Colonic mucosa (tissue), 4 donors: ENCODE measurements at regions of chr1 and their contacts with region 1.

Region 1: DNA sequence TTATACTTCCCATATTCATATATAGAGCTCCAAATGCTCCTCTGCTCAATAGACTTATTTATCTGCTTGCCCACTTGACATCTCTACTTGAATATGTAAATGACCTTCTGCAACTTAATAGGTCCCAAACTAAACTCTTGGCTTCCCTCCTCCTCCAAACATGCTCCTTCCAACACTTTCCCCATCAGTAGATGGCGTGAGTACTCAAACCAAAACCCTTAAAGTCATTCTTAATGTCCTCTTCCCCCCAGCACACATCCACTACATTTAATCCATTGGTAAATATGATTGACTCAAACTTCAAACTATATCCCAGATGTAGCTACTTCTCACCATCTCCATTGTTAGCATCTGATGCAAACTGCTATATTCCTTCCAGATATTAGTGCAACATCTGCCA is 48.5 kb upstream of the PBX1 start:
- DNase-seq: no peak
- H3K4me3 ChIP-seq: no peak overlapping the region
- H3K27ac ChIP-seq: no peak overlapping the region
- H3K4me1 ChIP-seq: no peaks in the 10 kb centered on the region
- H3K27me3 ChIP-seq: no peaks in the 10 kb centered on the region
- CTCF ChIP-seq: no peak

Region 2: DNA sequence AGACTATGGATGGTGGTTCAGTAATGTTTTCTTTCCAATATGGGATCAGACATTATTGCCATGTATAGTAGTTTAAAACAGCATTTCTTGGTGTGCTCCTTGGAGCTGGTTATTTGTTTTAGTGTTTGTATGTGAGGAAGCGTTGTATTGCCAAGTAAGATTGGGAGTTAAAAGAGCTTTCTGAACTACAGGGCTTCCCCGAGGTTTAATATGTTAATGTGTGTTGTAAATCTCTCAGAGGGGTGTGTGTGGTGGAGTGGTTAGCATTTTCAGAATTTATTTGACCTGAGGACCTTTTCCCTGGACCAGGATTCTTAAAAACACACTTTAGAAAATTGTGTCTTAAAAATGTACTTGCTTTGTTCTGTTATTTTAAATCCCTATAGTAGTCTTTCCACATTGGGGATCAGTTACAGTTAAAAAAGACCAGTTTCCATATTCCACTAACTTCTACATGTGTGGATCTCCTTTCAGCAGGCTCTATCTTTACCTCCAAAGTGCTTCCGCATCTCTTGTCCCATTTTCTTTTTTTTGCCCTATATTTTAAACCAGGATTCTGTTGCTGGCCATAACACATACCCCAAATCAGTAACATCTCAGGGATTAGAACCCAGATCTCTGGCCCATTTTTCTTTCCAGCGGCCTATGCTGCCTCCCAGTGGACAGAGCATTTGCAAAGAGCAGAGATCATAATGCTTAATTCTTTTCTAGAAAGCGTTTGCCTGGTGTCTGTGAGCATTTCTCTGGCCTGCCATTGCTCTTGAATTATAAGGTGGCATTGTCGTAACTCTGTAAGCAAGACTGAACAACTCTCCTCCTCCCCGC is 107.2 kb after region 1 on chr1:
- intact Hi-C with region 1: loop called (anchors 10 kb)
- DNase-seq: peak; percentile 70
- H3K4me3 ChIP-seq: no peak overlapping the region
- H3K27ac ChIP-seq: no peak overlapping the region
- H3K4me1 ChIP-seq: peaks cover 10% of the 10 kb centered on the region
- H3K27me3 ChIP-seq: no peaks in the 10 kb centered on the region
- CTCF ChIP-seq: peak; percentile 46

Region 3: DNA sequence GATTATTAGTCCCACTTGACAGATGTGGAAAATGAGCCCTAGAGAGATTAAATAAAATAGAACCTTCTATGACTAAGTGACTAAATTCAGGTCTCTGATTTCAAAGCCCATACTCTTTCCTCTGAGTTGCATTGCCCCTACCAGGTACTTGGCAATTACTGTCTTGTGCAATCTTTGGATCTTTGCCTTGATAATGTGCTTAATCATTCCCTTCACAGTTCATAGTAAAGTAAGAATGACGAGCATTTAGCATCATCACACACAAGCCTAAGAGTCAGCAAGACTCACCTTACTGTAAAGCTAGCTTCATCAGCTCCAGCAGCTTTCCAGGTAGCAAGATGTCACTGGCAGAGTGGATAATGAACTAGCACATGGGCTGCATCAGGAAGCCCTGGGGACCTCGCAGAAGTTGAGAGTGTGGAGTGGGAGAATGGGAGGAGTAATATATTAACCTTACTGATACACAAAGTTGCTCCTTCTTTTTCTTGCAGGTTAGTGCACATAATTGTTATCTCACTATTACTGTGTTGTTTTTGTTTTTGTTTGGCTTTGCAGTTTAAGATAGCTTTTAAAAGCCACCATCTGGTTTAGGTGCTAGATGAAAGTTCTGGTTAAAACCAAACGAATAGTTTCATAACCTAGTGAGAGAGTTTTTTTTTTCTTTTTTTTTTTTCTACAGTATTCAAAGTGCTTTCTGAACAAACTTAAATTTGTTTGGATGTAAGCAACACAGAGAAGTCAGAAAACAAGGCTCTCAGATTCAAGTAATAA is 120.4 kb after region 1 on chr1:
- intact Hi-C with region 1: no loop called
- DNase-seq: no peak
- H3K4me3 ChIP-seq: no peak overlapping the region
- H3K27ac ChIP-seq: no peak overlapping the region
- H3K4me1 ChIP-seq: no peaks in the 10 kb centered on the region
- H3K27me3 ChIP-seq: no peaks in the 10 kb centered on the region
- CTCF ChIP-seq: no peak

Region 4: GRCh38 chr1:164716992-164717703 is 206.7 kb after region 1 on chr1:
- intact Hi-C with region 1: no loop called
- DNase-seq: no peak
- H3K4me3 ChIP-seq: no peak overlapping the region
- H3K27ac ChIP-seq: no peak overlapping the region
- H3K4me1 ChIP-seq: no peaks in the 10 kb centered on the region
- H3K27me3 ChIP-seq: no peaks in the 10 kb centered on the region
- CTCF ChIP-seq: no peak